AG04449 (cell line): ENCODE measurements at regions of chr1 and their contacts with region 1.

Region 1: DNA sequence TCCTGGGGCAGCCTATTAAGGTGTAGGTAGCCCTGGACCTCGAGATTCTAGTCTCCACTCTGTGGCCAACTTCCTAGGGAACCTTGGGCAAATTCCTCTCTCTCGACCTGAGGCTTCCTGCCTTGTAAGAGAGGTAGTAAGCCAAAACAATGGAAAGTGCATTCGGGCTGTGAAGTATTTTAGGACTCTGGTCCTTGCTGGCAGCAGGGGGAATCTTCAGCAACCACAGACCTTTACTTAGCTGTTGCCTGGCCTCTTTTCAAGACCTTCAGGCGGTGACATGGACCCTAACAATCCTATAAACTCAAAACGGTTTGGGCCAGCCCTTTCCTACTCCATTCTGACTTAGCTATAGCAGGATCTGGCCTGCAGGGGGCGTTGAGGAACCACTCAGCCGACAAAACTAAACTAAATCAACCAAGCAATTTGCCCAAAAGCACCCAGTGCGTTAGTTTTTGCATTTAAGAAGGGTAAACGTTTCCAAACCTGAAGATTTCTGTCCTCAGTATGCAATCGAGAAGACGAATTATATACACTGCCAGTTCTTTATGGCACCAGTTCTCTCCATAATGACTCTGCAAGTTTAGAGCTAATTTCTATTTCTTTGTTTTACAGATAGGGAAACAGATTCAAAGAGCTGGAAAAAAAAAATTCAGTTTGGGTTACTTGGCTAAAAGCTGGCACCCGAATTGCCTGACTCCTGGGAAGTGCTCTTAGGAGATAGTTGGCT is 10.9 kb upstream of the SESN2 start:
- DNase-seq: no peak
- H3K4me3 ChIP-seq: peak overlapping the region; percentile 2; the same call in 1 of the 2 replicates
- CTCF ChIP-seq: peak; percentile 83

Region 2: DNA sequence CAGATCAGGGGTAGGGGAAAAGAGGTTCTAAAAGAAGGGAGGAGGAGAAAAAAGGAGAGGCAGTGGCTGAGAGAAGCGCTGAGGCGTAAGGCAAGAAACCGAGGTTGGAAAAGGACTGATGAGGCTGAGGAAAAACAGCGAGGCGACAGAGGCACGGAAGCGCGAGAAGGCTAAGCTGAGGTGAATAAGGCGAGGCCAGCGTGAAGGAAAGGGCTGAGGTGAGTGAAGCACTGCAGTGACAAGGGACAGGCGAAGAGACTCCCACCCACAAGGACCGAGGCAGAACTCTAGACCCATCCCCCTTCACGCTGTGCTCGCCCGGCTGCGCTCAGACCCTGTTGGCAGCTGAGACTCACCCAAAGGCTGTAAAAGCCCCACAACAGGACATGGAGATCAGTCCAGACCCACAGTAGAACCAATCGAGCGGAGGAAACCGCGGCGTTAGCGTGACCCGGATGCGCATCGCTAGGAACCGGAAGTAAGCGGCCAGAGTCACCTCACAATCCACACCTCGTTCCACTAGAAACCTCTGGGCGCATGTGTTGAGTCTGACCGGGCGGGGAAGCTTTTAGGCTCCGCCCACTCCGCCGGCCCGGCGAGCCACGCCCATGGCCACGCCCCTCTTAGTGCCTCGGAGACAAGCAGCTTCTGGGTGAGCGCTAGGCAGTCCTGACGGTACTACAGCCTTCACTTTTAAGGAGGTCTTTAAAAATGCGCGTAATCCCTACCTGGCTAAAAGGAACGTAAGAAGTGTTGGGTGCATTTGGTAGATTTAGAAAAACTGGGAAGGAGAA is 160.1 kb before region 1 on chr1 and contains the start of gene EYA3:
- CTCF ChIA-PET with region 1: interaction called, 18 read pairs
- POLR2A ChIA-PET with region 1: no interaction called
- DNase-seq: peak; percentile 73
- H3K4me3 ChIP-seq: peak within 1 kb of the TSS; percentile 96
- CTCF ChIP-seq: no peak

Region 3: GRCh38 chr1:28259307-28260167 is 11.1 kb after region 1 on chr1 and contains the start of gene SESN2:
- CTCF ChIA-PET with region 1: interaction called, 148 read pairs
- POLR2A ChIA-PET with region 1: interaction called, 32 read pairs
- DNase-seq: peak; percentile 91
- H3K4me3 ChIP-seq: peak within 1 kb of the TSS; percentile 93
- CTCF ChIP-seq: no peak

Region 4: DNA sequence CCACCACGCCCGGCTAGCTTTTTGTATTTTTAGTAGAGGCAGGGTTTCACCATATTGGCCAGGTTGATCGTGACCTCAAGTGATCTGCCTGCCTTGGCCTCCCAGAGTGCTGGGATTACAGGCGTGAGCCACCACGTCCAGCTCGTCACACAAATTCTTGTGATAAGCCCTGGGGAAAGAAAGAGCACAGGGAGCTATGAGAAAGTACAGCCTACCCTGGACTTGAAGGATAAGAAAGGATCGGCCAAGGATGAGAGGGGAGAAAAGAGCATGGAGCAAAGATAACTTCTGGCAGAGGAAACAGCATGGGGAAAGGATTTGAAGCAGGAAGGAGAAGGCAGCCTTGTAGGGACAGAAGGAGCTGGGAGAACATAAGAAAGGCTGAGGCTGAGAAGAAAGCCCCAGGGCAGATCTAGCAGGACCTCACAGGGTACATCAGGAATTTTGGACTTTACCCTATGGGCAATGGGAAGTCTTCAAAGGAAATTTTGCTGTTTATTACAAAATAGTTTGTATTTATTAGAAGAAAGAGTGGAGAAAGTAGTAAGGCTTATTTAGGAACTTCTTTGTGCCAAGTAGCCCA is 40.1 kb after region 1 on chr1:
- CTCF ChIA-PET with region 1: interaction called, 12 read pairs
- POLR2A ChIA-PET with region 1: no interaction called
- DNase-seq: no peak
- H3K4me3 ChIP-seq: no peak overlapping the region
- CTCF ChIP-seq: no peak

Region 5: GRCh38 chr1:28359592-28360239 is 111.3 kb after region 1 on chr1:
- CTCF ChIA-PET with region 1: interaction called, 62 read pairs
- POLR2A ChIA-PET with region 1: no interaction called
- DNase-seq: no peak
- H3K4me3 ChIP-seq: no peak overlapping the region
- CTCF ChIP-seq: peak; percentile 57

Region 6: GRCh38 chr1:28392027-28392652 is 143.7 kb after region 1 on chr1:
- CTCF ChIA-PET with region 1: no interaction called
- POLR2A ChIA-PET with region 1: no interaction called
- DNase-seq: peak; percentile 81
- H3K4me3 ChIP-seq: no peak overlapping the region
- CTCF ChIP-seq: no peak

Region 7: DNA sequence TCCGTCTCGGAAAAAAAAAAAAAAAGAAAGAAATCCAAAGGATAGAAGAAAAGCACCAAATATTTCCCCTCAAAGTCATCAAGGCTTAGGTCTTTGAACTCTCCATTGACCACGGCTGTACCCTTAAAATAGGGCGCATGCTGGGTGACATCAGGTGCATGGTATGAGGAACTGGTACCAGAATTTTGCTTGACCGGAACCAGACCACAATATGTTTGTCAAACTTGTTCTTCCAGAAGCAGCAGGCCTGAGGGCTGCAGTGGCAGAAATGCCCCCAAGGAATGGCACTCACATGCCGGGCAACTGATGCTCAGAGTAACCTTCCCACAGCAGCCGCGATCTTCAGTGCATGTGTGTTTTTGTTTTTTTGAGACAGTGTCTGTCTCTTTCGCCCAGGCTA is 278.4 kb after region 1 on chr1:
- CTCF ChIA-PET with region 1: no interaction called
- POLR2A ChIA-PET with region 1: no interaction called
- DNase-seq: no peak
- H3K4me3 ChIP-seq: no peak overlapping the region
- CTCF ChIP-seq: no peak